ENCODE measurements at regions of chr22 and their contacts with region 1.

Region 1: GRCh38 chr22:28951969-28952521 is 68.7 kb downstream of the ZNRF3 start:
- DNase-seq: no peak
- ATAC-seq: no peak
- H3K4me3 ChIP-seq: no peak overlapping the region
- H3K4me3 Mint-ChIP-seq: no peak overlapping the region
- H3K27ac ChIP-seq: no peak overlapping the region
- H3K27ac Mint-ChIP-seq: no peak overlapping the region
- H3K4me1 ChIP-seq: peaks cover 15 to 20% of the 10 kb centered on the region in 2 donors
- H3K4me1 Mint-ChIP-seq: peaks cover 12 to 19% (median 19%) of the 10 kb centered on the region in 7 donors
- H3K27me3 ChIP-seq: peaks cover 0 to 42% of the 10 kb centered on the region in 2 donors
- H3K27me3 Mint-ChIP-seq: peaks cover 71 to 91% (median 82%) of the 10 kb centered on the region in 5 donors

Region 2: GRCh38 chr22:28674121-28674563 is 277.9 kb before region 1 on chr22:
- CTCF ChIA-PET with region 1: no interaction called
- POLR2A ChIA-PET with region 1: no interaction called
- intact Hi-C with region 1: loop called (anchors 5 kb)
- DNase-seq: peak in 7 of 9 donors; percentile 57 to 75 (median 61)
- ATAC-seq: peak; percentile 91
- H3K4me3 ChIP-seq: no peak overlapping the region
- H3K4me3 Mint-ChIP-seq: peak overlapping the region in 9 of 10 donors; percentile 70 to 95 (median 78)
- H3K27ac ChIP-seq: no peak overlapping the region
- H3K27ac Mint-ChIP-seq: peak overlapping the region; percentile 88 to 100 (median 98)
- H3K4me1 ChIP-seq: peaks cover 16 to 17% of the 10 kb centered on the region in 2 donors
- H3K4me1 Mint-ChIP-seq: peaks cover 23 to 35% (median 34%) of the 10 kb centered on the region in 7 donors
- H3K27me3 ChIP-seq: peaks cover 10 to 42% of the 10 kb centered on the region in 2 donors
- H3K27me3 Mint-ChIP-seq: peaks cover 47 to 83% (median 66%) of the 10 kb centered on the region in 5 donors

Region 3: GRCh38 chr22:29031227-29032011 is 79.4 kb after region 1 on chr22:
- CTCF ChIA-PET with region 1: no interaction called
- POLR2A ChIA-PET with region 1: no interaction called
- intact Hi-C with region 1: loop called in 1 of 2 experiments (anchors 10 kb)
- DNase-seq: peak in 1 of 9 donors; percentile 2
- ATAC-seq: no peak
- H3K4me3 ChIP-seq: no peak overlapping the region
- H3K4me3 Mint-ChIP-seq: peak overlapping the region in 6 of 10 donors; percentile 24 to 78 (median 68)
- H3K27ac ChIP-seq: no peak overlapping the region
- H3K27ac Mint-ChIP-seq: peak overlapping the region in 1 of 9 donors; percentile 42
- H3K4me1 ChIP-seq: no peaks in the 10 kb centered on the region
- H3K4me1 Mint-ChIP-seq: peaks cover 11 to 23% (median 16%) of the 10 kb centered on the region in 7 donors
- H3K27me3 ChIP-seq: peaks cover 0 to 13% of the 10 kb centered on the region in 2 donors
- H3K27me3 Mint-ChIP-seq: peaks cover 35 to 68% (median 50%) of the 10 kb centered on the region in 5 donors